ENCODE measurements at regions of chr11 and their contacts with region 1.

Region 1: GRCh38 chr11:115324581-115325432 is 179.4 kb downstream of the CADM1 start:
- DNase-seq: no peak

Region 2: DNA sequence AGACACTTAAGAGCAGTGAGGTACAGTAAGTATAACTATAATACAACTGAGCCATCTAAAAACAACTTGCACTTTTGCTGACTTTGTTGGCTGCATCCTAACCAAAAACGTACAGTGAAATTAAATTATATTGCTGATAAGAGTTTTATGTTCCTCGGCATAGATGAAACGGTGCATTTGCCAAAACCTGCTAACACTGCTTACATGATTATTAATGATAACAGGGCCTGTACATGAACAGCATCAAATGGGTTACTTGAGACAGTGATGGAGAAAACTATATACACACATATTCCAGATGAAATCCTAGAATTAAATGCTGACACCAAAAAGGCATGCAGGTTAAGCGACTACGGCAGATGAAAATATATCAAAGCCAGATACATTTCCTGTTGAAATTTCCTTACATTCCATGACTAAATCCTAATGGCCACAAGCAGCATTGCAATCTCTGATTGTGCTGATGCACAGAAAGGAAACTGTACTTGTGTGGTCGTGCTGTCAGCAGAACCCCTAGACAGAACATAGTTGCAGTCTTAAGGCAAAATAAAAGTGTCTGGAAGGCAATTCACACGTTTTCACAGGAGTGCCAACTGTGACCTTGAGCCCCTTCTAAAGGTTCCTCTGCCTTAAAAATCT is 35.5 kb after region 1 on chr11:
- intact Hi-C with region 1: no loop called
- DNase-seq: no peak

Region 3: GRCh38 chr11:116229236-116229970 is 904.6 kb after region 1 on chr11:
- intact Hi-C with region 1: loop called (anchors 5 kb)
- DNase-seq: no peak

Region 4: DNA sequence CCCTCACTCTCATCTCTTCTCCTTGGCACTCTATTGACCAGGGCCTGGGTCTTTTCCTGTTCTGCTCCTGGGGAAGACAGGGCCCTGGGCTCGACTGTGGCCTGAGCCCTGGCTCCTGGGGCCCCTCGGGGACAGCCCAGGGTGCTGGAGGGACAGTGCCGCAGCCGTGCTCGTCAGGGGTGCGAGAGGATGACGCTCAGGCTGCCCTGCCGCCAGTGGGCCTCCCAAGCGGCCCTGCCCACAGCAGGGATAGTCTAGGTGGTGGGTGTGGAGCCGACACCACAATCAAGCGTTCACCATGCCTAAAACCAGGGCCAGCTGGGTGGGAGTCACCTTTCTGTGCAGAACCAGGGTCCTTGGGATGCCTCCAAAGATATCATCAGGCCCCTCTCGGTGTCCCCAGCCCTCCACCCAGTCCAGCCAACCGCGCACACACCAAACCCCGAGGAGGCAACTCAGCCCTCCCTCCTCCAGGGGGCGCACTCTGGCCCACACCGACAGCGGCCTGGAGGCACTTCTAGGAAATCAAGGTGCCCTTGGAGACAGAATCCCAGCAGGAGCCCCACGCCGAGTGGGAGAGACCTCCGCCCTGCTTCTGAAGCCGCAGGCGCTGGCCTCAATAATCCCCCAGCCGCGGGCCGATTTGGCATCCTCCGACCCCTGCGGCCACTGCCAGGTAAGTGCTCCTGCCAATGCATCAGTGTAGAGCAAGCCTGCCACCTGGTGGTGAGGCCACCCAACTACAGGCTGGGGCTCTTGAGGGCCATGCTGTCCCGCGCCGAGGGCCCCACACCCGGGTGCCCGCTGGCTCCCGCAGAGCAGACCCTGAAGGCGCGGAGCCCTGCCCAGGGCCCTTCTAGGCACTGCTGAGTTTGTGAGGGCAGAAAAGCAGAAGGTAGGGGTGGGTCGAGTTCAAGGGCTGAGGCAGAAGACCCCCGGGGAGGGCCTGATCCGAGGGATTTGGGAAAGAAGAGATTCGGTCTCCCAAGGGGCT is 951.5 kb after region 1 on chr11:
- intact Hi-C with region 1: loop called (anchors 2 kb)
- DNase-seq: peak; percentile 84